Mammary epithelial cell (primary cell): ENCODE measurements at regions of chr9 and their contacts with region 1.

Region 1: GRCh38 chr9:98873951-98874371 is 66.5 kb downstream of the GALNT12 start:
- DNase-seq: no peak
- H3K4me3 ChIP-seq: no peak overlapping the region
- H3K27ac ChIP-seq: no peak overlapping the region
- H3K4me1 ChIP-seq: no peaks in the 10 kb centered on the region
- H3K27me3 ChIP-seq: no peaks in the 10 kb centered on the region
- CTCF ChIP-seq: no peak

Region 2: GRCh38 chr9:98775831-98776441 is 98.0 kb before region 1 on chr9:
- CTCF ChIA-PET with region 1: no interaction called
- dilution Hi-C with region 1: no loop called
- in situ Hi-C with region 1: no loop called
- intact Hi-C with region 1: no loop called
- DNase-seq: peak; percentile 20
- H3K4me3 ChIP-seq: no peak overlapping the region
- H3K27ac ChIP-seq: no peak overlapping the region
- H3K4me1 ChIP-seq: no peaks in the 10 kb centered on the region
- H3K27me3 ChIP-seq: no peaks in the 10 kb centered on the region
- CTCF ChIP-seq: peak; percentile 80 to 83

Region 3: GRCh38 chr9:99071313-99072039 is 197.5 kb after region 1 on chr9:
- CTCF ChIA-PET with region 1: no interaction called
- dilution Hi-C with region 1: loop called (anchors 5 kb)
- in situ Hi-C with region 1: no loop called
- intact Hi-C with region 1: no loop called
- DNase-seq: no peak
- H3K4me3 ChIP-seq: no peak overlapping the region
- H3K27ac ChIP-seq: no peak overlapping the region
- H3K4me1 ChIP-seq: no peaks in the 10 kb centered on the region
- H3K27me3 ChIP-seq: no peaks in the 10 kb centered on the region
- CTCF ChIP-seq: no peak